ENCODE measurements at regions of chr19 and their contacts with region 1.

Region 1: DNA sequence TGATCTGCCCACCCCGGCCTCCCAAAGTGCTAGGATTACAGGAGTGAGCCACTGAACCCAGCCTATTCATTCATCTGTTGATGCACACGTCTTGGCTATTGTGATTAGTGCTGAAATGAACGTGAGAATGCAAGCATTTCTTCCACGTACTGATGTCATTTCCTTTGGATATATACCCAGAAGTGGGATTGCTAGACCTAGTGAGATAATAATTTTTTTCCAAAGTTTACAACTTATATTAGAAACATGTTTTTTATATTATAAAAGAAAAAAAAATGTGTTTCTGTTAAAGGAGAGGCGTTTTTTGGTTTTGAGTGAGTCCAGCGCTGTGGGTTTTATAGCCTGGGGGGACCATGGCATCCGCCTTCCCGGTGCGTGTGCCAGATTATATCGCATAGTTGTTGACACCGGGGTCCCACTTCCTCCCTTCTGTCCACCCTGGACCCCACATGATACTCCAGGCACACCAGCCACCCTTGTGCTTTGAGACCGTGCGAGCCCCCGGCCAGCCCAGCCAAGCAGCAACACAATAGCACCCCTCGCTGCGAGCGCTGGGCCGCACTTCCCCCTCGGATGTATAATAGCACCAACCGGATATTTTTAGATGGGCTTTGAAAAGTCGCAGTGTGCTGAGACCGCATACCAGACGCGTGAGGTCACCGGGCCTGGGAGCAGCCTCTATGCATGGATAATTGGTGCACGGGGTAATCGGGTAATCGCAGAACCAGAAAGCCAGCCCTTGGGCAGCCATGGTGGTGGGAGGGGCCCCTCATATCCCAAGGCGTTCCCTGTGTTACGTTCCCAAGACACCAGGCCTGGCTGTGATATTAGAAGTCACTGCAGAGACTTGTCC is 59.6 kb downstream of the MYO9B start:
- DNase-seq: peak; percentile 96 to 97 (median 97)
- ATAC-seq: peak; percentile 96 to 97
- H3K4me3 ChIP-seq: no peak overlapping the region
- H3K27ac ChIP-seq: peak overlapping the region; percentile 99
- H3K4me1 ChIP-seq: peaks cover 16% of the 10 kb centered on the region
- H3K27me3 ChIP-seq: no peaks in the 10 kb centered on the region

Region 2: GRCh38 chr19:17075035-17075863 is 60.0 kb before region 1 on chr19 and contains the starts of genes HAUS8 and MYO9B:
- intact Hi-C with region 1: loop called (anchors 5 to 10 kb)
- DNase-seq: peak; percentile 100
- ATAC-seq: peak; percentile 95 to 98
- H3K4me3 ChIP-seq: peak within 1 kb of the TSS; percentile 77
- H3K27ac ChIP-seq: peak within 1 kb of the TSS; percentile 82
- H3K4me1 ChIP-seq: peaks cover 14% of the 10 kb centered on the region
- H3K27me3 ChIP-seq: no peaks in the 10 kb centered on the region
- total RNA-seq, gene HAUS8: 3.3 to 6.1 (median 5.6) TPM
- total RNA-seq, gene MYO9B: 31.5 to 42.1 (median 36.6) TPM

Region 3: GRCh38 chr19:17097593-17098126 is 37.6 kb before region 1 on chr19:
- intact Hi-C with region 1: loop called in 1 of 4 experiments (anchors 5 kb)
- DNase-seq: no peak
- ATAC-seq: peak; percentile 47 to 62
- H3K4me3 ChIP-seq: no peak overlapping the region
- H3K27ac ChIP-seq: peak overlapping the region; percentile 48
- H3K4me1 ChIP-seq: peaks cover 2% of the 10 kb centered on the region
- H3K27me3 ChIP-seq: no peaks in the 10 kb centered on the region